HepG2 (cell line): ENCODE measurements at regions of chr17 and their contacts with region 1.

Region 1: DNA sequence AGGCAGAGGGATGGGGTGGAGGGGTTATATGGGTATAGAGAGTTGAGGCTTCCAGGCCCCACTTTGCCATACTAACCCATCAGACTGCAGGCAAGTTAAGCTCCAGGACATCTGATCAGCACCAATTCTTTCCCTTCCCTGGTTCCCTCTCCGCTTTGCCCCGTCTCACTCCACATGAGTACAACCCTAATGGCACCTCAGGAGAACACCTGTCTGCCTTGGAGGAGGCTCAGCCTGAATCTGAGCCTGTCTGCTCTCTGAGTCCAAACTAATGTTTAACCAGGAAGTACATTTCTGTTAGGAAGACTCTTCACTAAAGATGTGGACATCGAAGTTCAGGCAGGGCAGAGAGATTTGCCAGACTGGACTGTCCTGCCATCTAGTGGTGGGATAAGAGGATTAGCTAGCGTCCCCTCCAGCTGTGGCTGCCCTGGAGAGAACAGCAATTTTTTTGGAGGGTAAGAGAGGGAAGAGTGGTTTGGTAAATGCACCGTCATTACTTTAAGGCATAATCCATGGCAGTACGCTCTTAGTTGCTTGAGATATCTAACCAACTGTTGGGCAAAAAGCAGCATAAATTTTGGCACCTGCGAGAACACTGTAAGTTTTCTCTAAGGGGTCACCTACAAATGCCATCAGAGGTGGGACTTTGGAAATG is 29.2 kb upstream of the LRRC75A start:
- DNase-seq: peak; percentile 87
- ATAC-seq: peak; percentile 98
- H3K4me3 ChIP-seq: no peak overlapping the region
- H3K27ac ChIP-seq: no peak overlapping the region
- H3K4me1 ChIP-seq: peaks cover 22% of the 10 kb centered on the region
- H3K27me3 ChIP-seq: peaks cover 0 to 15% of the 10 kb centered on the region in 2 experiments; a peak in 2 of 5 replicates
- CTCF ChIP-seq: peak; percentile 97
- EP300 ChIP-seq: no peak
- POLR2A ChIP-seq: no peak
- RAD21 ChIP-seq: peak; percentile 92

Region 2: GRCh38 chr17:16363749-16364536 is 157.3 kb before region 1 on chr17:
- CTCF ChIA-PET with region 1: interaction called, 7 read pairs
- POLR2A ChIA-PET with region 1: no interaction called
- in situ Hi-C with region 1: loop called (anchors 10 kb)
- intact Hi-C with region 1: loop called (anchors 2 kb)
- DNase-seq: peak; percentile 66
- ATAC-seq: peak; percentile 93
- H3K4me3 ChIP-seq: no peak overlapping the region
- H3K27ac ChIP-seq: no peak overlapping the region
- H3K4me1 ChIP-seq: peaks cover 38% of the 10 kb centered on the region
- H3K27me3 ChIP-seq: no peaks in the 10 kb centered on the region
- CTCF ChIP-seq: peak; percentile 86
- EP300 ChIP-seq: no peak
- POLR2A ChIP-seq: no peak
- RAD21 ChIP-seq: peak; percentile 74

Region 3: GRCh38 chr17:16428098-16428882 is 92.9 kb before region 1 on chr17:
- CTCF ChIA-PET with region 1: interaction called, 5 read pairs
- POLR2A ChIA-PET with region 1: interaction called, 6 read pairs
- in situ Hi-C with region 1: no loop called
- intact Hi-C with region 1: loop called (anchors 1 kb)
- DNase-seq: peak; percentile 64
- ATAC-seq: peak; percentile 87
- H3K4me3 ChIP-seq: no peak overlapping the region
- H3K27ac ChIP-seq: no peak overlapping the region
- H3K4me1 ChIP-seq: peaks cover 37% of the 10 kb centered on the region
- H3K27me3 ChIP-seq: no peaks in the 10 kb centered on the region
- CTCF ChIP-seq: peak; percentile 88
- EP300 ChIP-seq: no peak
- POLR2A ChIP-seq: no peak
- RAD21 ChIP-seq: peak; percentile 57; the same call in 1 of the 2 replicates

Region 4: GRCh38 chr17:16456742-16457316 is 64.4 kb before region 1 on chr17:
- CTCF ChIA-PET with region 1: interaction called, 45 read pairs
- POLR2A ChIA-PET with region 1: no interaction called
- in situ Hi-C with region 1: loop called (anchors 5 kb)
- intact Hi-C with region 1: loop called (anchors 1 kb)
- DNase-seq: no peak
- ATAC-seq: 0 out of 3 replicates have a peak, but pooled peaks have one; percentile 5
- H3K4me3 ChIP-seq: no peak overlapping the region
- H3K27ac ChIP-seq: no peak overlapping the region
- H3K4me1 ChIP-seq: peaks cover 31% of the 10 kb centered on the region
- H3K27me3 ChIP-seq: no peaks in the 10 kb centered on the region
- CTCF ChIP-seq: peak; percentile 48; the same call in 1 of the 2 replicates
- EP300 ChIP-seq: no peak
- POLR2A ChIP-seq: no peak
- RAD21 ChIP-seq: no peak

Region 5: GRCh38 chr17:16465861-16466338 is 55.3 kb before region 1 on chr17:
- CTCF ChIA-PET with region 1: no interaction called
- POLR2A ChIA-PET with region 1: no interaction called
- in situ Hi-C with region 1: no loop called
- intact Hi-C with region 1: loop called (anchors 5 kb)
- DNase-seq: no peak
- ATAC-seq: peak; percentile 7; the same call in 1 of the 3 replicates
- H3K4me3 ChIP-seq: no peak overlapping the region
- H3K27ac ChIP-seq: no peak overlapping the region
- H3K4me1 ChIP-seq: peaks cover 86% of the 10 kb centered on the region
- H3K27me3 ChIP-seq: peaks cover 4 to 16% of the 10 kb centered on the region in 2 experiments; a peak in 3 of 5 replicates
- CTCF ChIP-seq: no peak
- EP300 ChIP-seq: no peak
- POLR2A ChIP-seq: no peak
- RAD21 ChIP-seq: no peak